ENCODE measurements at regions of chr1 and their contacts with region 1.

Region 1: GRCh38 chr1:160726498-160727315 is 12.3 kb upstream of the SLAMF7 start:
- DNase-seq: peak; percentile 61
- ATAC-seq: peak; percentile 89
- H3K4me3 ChIP-seq: no peak overlapping the region
- H3K27ac ChIP-seq: no peak overlapping the region
- H3K4me1 ChIP-seq: peaks cover 12% of the 10 kb centered on the region
- H3K27me3 ChIP-seq: no peaks in the 10 kb centered on the region; a peak in 2 of 5 replicates
- CTCF ChIP-seq: peak; percentile 80
- EP300 ChIP-seq: no peak
- POLR2A ChIP-seq: no peak
- RAD21 ChIP-seq: peak; percentile 43; the same call in 1 of the 2 replicates

Region 2: DNA sequence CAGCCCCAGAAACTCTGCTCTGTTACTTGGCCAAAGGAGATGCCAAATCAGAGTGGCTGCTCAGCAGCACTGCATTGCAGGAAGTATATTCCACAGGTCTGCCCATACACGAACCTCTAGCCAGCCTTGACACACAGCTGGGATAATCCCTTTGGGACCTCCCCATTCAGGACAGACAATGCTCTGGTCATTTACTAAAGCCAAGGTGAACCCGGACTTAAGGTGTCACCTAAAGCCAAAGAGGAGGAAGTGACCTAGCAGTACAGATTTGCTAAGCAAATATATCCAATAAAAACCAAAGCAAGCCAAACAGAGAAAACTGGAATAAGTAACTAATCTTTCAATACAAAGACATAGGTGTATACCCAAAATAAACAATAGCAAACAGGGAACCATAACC is 411.3 kb before region 1 on chr1:
- CTCF ChIA-PET with region 1: no interaction called
- POLR2A ChIA-PET with region 1: no interaction called
- in situ Hi-C with region 1: no loop called
- intact Hi-C with region 1: no loop called
- DNase-seq: peak; percentile 65
- ATAC-seq: peak; percentile 78
- H3K4me3 ChIP-seq: no peak overlapping the region
- H3K27ac ChIP-seq: no peak overlapping the region
- H3K4me1 ChIP-seq: 0 out of 2 replicates have a peak, but pooled peaks cover 7% of the 10 kb centered on the region
- H3K27me3 ChIP-seq: no peaks in the 10 kb centered on the region
- CTCF ChIP-seq: no peak
- EP300 ChIP-seq: no peak
- POLR2A ChIP-seq: no peak
- RAD21 ChIP-seq: no peak

Region 3: DNA sequence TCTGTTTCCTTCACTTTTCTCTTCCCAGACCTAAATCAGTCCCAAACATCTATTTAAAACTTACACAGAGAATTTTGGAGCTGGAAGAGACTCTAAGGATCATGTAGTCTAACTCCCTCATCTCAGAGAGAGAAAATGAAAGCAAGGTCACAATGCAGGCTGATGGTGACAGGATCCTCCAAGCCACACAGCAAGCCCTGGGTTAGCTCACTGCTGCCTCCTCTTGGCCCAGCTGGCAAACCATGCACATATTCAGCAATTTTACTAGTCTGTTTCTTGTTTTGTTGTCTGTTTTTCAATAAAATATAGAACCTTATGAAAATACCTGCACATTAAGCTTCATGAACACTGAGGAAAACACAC is 41.6 kb after region 1 on chr1:
- CTCF ChIA-PET with region 1: interaction called, 6 read pairs
- POLR2A ChIA-PET with region 1: no interaction called
- in situ Hi-C with region 1: no loop called
- intact Hi-C with region 1: loop called (anchors 2 kb)
- DNase-seq: peak; percentile 29
- ATAC-seq: peak; percentile 96
- H3K4me3 ChIP-seq: peak overlapping the region in 2 of 3 experiments; percentile 40 to 43; a peak in 2 of 6 replicates
- H3K27ac ChIP-seq: no peak overlapping the region
- H3K4me1 ChIP-seq: no peaks in the 10 kb centered on the region
- H3K27me3 ChIP-seq: peaks cover 0 to 8% of the 10 kb centered on the region in 2 experiments; a peak in 1 of 5 replicates
- CTCF ChIP-seq: peak; percentile 70
- EP300 ChIP-seq: no peak
- POLR2A ChIP-seq: no peak
- RAD21 ChIP-seq: no peak

Region 4: GRCh38 chr1:160830321-160831153 is 103.8 kb after region 1 on chr1:
- CTCF ChIA-PET with region 1: interaction called, 19 read pairs
- POLR2A ChIA-PET with region 1: no interaction called
- in situ Hi-C with region 1: no loop called
- intact Hi-C with region 1: loop called (anchors 1 kb)
- DNase-seq: peak; percentile 40
- ATAC-seq: peak; percentile 93
- H3K4me3 ChIP-seq: no peak overlapping the region
- H3K27ac ChIP-seq: no peak overlapping the region
- H3K4me1 ChIP-seq: no peaks in the 10 kb centered on the region
- H3K27me3 ChIP-seq: no peaks in the 10 kb centered on the region
- CTCF ChIP-seq: peak; percentile 63
- EP300 ChIP-seq: no peak
- POLR2A ChIP-seq: no peak
- RAD21 ChIP-seq: peak; percentile 34; the same call in 1 of the 2 replicates

Region 5: GRCh38 chr1:160951443-160952128 is 224.9 kb after region 1 on chr1:
- CTCF ChIA-PET with region 1: interaction called, 7 read pairs
- POLR2A ChIA-PET with region 1: no interaction called
- in situ Hi-C with region 1: loop called (anchors 10 kb)
- intact Hi-C with region 1: loop called (anchors 2 kb)
- DNase-seq: peak; percentile 35
- ATAC-seq: peak; percentile 88
- H3K4me3 ChIP-seq: no peak overlapping the region
- H3K27ac ChIP-seq: no peak overlapping the region
- H3K4me1 ChIP-seq: peaks cover 28% of the 10 kb centered on the region
- H3K27me3 ChIP-seq: peaks cover 1 to 4% of the 10 kb centered on the region in 2 experiments; a peak in 1 of 5 replicates
- CTCF ChIP-seq: peak; percentile 85
- EP300 ChIP-seq: no peak
- POLR2A ChIP-seq: no peak
- RAD21 ChIP-seq: peak; percentile 52; the same call in 1 of the 2 replicates

Measured in HepG2 (cell line).